K562 (cell line): ENCODE measurements at regions of chrX and their contacts with region 1.

Region 1: DNA sequence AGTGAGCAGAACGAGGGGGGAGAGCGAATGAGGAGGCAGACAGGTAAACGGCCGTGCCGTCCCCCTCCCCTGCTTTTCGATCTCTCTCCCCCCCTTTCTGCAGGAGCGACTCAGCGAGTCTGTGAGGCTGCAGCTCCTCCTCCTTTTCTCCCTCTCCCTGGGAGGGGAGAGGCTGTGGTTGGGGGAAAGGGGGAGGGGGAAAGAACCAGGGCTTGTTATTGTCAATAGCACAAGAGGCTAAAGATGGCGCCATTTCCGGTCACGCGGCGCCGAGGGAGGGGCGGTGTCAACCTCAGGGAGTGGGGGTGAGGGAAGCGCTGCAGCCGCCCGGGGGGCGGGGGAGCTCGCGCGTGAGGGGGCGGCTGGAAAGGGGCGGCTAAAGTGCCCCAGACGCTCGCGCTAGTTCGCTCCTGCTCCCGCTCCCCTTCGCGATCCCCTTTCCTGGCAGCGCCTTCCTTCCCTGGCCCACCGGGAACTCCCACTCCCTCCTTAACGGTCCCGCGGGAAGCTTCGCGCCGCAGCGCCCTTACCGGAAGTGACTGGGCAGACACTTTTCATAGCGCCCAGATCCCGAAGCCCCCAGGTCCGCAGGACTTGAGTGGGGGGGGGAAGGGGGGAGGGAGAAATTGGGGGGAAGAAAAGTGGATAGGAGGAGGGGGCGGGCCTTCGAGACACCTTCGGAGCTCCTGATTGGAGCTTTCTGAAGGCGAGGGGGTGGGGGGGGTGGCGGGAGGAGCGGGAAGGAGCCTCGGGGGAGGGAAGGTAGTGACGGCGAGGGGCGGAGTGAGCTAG is at the start of gene CUL4B:
- DNase-seq: peak; percentile 90 to 97 (median 92)
- ATAC-seq: peak; percentile 85
- H3K4me3 ChIP-seq: peak within 1 kb of the TSS; percentile 80
- H3K27ac ChIP-seq: peak within 1 kb of the TSS; percentile 99
- H3K4me1 ChIP-seq: peaks cover 11 to 27% of the 10 kb centered on the region in 2 experiments
- H3K27me3 ChIP-seq: no peaks in the 10 kb centered on the region
- CTCF ChIP-seq: no peak
- EP300 ChIP-seq: no peak
- POLR2A ChIP-seq: peak; percentile 81
- RAD21 ChIP-seq: no peak
- polyA plus RNA-seq, gene CUL4B: 15.5 to 23.6 TPM

Region 2: GRCh38 chrX:119391279-119391678 is 1169.8 kb before region 1 on chrX:
- CTCF ChIA-PET with region 1: no interaction called
- POLR2A ChIA-PET with region 1: no interaction called
- in situ Hi-C with region 1: no loop called
- intact Hi-C with region 1: no loop called
- DNase-seq: peak in 2 of 4 experiments; percentile 24 to 30
- ATAC-seq: peak; percentile 60; the same call in 1 of the 3 replicates
- H3K4me3 ChIP-seq: no peak overlapping the region
- H3K27ac ChIP-seq: no peak overlapping the region
- H3K4me1 ChIP-seq: peaks cover 0 to 3% of the 10 kb centered on the region in 2 experiments; a peak in 2 of 5 replicates
- H3K27me3 ChIP-seq: no peaks in the 10 kb centered on the region
- CTCF ChIP-seq: peak; percentile 8 to 41 (median 35); a peak in 3 of 6 replicates
- EP300 ChIP-seq: no peak
- POLR2A ChIP-seq: no peak
- RAD21 ChIP-seq: peak in 1 of 2 experiments; percentile 54; a peak in 2 of 4 replicates

Region 3: GRCh38 chrX:120228187-120228908 is 332.7 kb before region 1 on chrX:
- CTCF ChIA-PET with region 1: no interaction called
- POLR2A ChIA-PET with region 1: no interaction called
- in situ Hi-C with region 1: no loop called
- intact Hi-C with region 1: no loop called
- DNase-seq: peak in 1 of 4 experiments; percentile 11
- ATAC-seq: peak; percentile 78
- H3K4me3 ChIP-seq: no peak overlapping the region
- H3K27ac ChIP-seq: 0 out of 3 replicates have a peak overlapping the region, but pooled peaks have one; percentile 25
- H3K4me1 ChIP-seq: peaks cover 8 to 10% of the 10 kb centered on the region in 2 experiments; a peak in 4 of 5 replicates
- H3K27me3 ChIP-seq: no peaks in the 10 kb centered on the region
- CTCF ChIP-seq: no peak
- EP300 ChIP-seq: no peak
- POLR2A ChIP-seq: no peak
- RAD21 ChIP-seq: no peak

Region 4: DNA sequence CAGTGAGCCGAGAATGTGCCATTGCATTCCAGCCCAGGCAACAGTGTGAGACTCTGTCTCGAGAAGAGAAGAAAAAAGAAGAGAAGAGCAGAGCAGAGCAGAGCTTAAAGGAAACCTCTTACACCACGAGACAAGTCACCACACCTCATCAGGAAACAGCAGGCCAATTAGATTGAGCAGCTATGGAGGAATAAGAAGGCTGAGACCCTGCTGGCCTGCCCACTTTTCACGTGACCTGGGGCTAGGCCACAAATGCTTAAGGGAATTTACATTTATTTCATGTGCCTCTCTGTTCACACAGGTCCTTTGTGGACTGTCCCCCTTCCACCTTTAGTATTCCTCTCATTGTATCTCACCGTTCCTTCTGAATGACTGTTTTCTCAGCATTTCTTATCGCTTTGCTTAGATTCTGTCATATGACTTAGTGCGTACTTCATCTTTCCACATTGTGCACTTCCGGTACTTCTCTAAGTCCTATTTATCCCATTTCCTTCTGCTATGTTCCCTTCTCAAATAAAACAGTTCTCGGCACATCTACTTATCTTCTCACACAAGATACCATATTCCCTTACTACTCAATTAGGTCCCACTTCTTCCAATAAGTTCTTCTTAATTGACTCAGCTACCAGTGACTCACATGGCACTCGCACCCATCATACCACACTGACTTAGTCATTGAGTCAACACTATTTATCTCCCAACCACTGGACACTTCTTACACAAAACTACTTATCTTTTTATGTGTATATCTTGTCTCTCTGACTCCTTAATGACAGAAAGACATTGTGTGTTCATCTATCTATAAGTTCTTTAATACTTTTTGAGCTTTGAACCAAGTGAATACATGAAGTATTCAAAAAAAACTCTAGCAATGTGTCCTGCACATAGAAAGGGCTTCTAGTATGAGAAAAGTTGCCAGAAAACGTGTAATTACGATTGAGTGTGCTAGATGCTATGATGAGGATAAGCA is 11.3 kb before region 1 on chrX:
- CTCF ChIA-PET with region 1: no interaction called
- POLR2A ChIA-PET with region 1: interaction called, 13 read pairs
- in situ Hi-C with region 1: no loop called
- intact Hi-C with region 1: no loop called
- DNase-seq: peak; percentile 9 to 69 (median 32)
- ATAC-seq: peak; percentile 87
- H3K4me3 ChIP-seq: no peak overlapping the region
- H3K27ac ChIP-seq: peak overlapping the region; percentile 91
- H3K4me1 ChIP-seq: peaks cover 0 to 13% of the 10 kb centered on the region in 2 experiments; a peak in 2 of 5 replicates
- H3K27me3 ChIP-seq: no peaks in the 10 kb centered on the region
- CTCF ChIP-seq: no peak
- EP300 ChIP-seq: peak; percentile 30; the same call in 1 of the 2 replicates
- POLR2A ChIP-seq: no peak
- RAD21 ChIP-seq: no peak

Region 5: GRCh38 chrX:120603707-120604360 is 42.8 kb after region 1 on chrX and contains the start of gene MCTS1:
- CTCF ChIA-PET with region 1: no interaction called
- POLR2A ChIA-PET with region 1: interaction called, 15 read pairs
- in situ Hi-C with region 1: no loop called
- intact Hi-C with region 1: loop called (anchors 1 kb)
- DNase-seq: peak; percentile 67 to 94 (median 76)
- ATAC-seq: peak; percentile 98
- H3K4me3 ChIP-seq: peak within 1 kb of the TSS; percentile 86
- H3K27ac ChIP-seq: peak within 1 kb of the TSS; percentile 95
- H3K4me1 ChIP-seq: no peaks in the 10 kb centered on the region; a peak in 2 of 5 replicates
- H3K27me3 ChIP-seq: no peaks in the 10 kb centered on the region
- CTCF ChIP-seq: no peak
- EP300 ChIP-seq: peak; percentile 50
- POLR2A ChIP-seq: peak; percentile 88
- RAD21 ChIP-seq: no peak
- polyA plus RNA-seq, gene MCTS1: 270 to 300 TPM